ENCODE measurements at regions of chr10 and their contacts with region 1.

Region 1: DNA sequence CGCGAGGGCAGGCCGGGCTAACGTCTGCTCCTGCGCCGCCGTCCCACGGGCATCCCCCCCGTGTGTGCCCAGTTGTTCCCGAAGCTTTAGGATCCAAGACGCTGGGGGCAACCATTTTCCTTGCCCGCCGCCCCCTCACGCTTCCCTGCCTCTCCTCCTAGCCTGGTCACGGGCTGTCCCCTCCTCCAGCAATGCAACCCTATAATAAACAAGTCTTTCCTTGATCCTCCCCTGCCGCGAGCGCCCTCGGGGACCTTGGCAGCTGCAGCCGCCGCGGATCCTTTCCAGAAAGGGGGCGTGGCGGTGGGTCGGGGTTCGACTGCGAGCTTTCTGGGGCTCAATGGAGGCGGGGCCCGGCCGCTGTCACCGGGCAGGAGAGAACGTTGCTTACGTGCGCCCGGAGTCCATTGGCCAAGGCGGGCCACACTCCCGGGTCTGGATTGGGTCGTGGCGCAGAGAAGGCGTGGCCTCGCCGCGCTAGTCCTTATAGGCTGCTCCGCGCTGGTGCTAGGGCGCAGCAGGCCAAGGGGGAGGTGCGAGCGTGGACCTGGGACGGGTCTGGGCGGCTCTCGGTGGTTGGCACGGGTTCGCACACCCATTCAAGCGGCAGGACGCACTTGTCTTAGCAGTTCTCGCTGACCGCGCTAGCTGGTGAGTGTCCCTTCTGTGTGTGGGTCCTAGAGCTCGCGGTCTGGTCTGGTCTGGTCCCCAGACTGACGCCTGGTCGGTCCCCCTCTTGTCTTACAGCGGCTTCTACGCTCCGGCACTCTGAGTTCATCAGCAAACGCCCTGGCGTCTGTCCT is at the start of gene DDIT4:
- DNase-seq: peak; percentile 97
- ATAC-seq: peak; percentile 94
- H3K4me3 ChIP-seq: peak within 1 kb of the TSS; percentile 91 to 99 (median 98)
- H3K4me3 Mint-ChIP-seq: peak within 1 kb of the TSS; percentile 98
- H3K27ac ChIP-seq: peak within 1 kb of the TSS; percentile 80 to 87
- H3K27ac Mint-ChIP-seq: peak within 1 kb of the TSS; percentile 97
- H3K4me1 ChIP-seq: peaks cover 22 to 33% of the 10 kb centered on the region in 2 donors
- H3K4me1 Mint-ChIP-seq: peaks cover 45% of the 10 kb centered on the region
- H3K27me3 ChIP-seq: no peaks in the 10 kb centered on the region
- H3K27me3 Mint-ChIP-seq: no peaks in the 10 kb centered on the region
- CTCF ChIP-seq: no peak
- total RNA-seq, gene DDIT4: 103 and 110 TPM in 2 replicates

Region 2: DNA sequence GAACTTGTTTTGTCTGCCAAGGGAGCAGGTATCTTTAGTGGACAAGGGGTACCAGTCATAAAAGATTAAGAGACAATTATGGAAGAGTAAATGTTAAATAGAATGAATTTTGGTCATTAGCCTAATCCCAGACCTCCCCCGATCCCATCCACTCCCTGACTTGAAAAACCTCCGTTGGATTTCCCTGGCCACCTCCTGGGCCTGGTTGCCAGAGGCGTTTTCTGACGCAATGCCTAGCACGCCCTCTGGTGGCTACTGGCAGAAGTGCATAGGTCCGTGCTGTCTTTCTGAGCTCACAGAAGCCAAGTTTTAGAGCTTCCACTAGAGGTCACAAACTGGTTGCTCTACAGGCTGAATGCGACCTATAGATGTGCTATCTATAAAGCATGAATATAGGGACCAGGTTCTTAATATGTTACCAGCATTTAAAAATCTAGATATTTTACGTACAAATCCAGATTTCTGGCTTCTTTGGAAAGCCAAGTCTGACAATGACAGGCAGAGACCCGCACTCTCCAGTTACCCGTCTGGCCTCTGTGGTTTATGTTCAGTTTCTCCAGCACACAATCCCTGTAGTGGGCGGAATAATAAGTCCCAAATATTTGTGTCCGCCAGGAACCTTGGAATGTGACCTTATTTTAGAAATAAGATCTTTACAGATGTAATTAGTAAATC is 225.0 kb before region 1 on chr10:
- CTCF ChIA-PET with region 1: interaction called, 11 read pairs
- POLR2A ChIA-PET with region 1: no interaction called
- intact Hi-C with region 1: no loop called
- DNase-seq: peak; percentile 91
- ATAC-seq: peak; percentile 98
- H3K4me3 ChIP-seq: no peak overlapping the region
- H3K4me3 Mint-ChIP-seq: no peak overlapping the region
- H3K27ac ChIP-seq: no peak overlapping the region
- H3K27ac Mint-ChIP-seq: no peak overlapping the region
- H3K4me1 ChIP-seq: no peaks in the 10 kb centered on the region
- H3K4me1 Mint-ChIP-seq: no peaks in the 10 kb centered on the region
- H3K27me3 ChIP-seq: no peaks in the 10 kb centered on the region
- H3K27me3 Mint-ChIP-seq: no peaks in the 10 kb centered on the region
- CTCF ChIP-seq: peak; percentile 99

Region 3: GRCh38 chr10:72223743-72224101 is 49.9 kb before region 1 on chr10:
- CTCF ChIA-PET with region 1: interaction called, 11 read pairs
- POLR2A ChIA-PET with region 1: interaction called, 25 read pairs
- intact Hi-C with region 1: no loop called
- DNase-seq: peak; percentile 34
- ATAC-seq: peak; percentile 24
- H3K4me3 ChIP-seq: no peak overlapping the region
- H3K4me3 Mint-ChIP-seq: peak overlapping the region; percentile 44
- H3K27ac ChIP-seq: peak overlapping the region; percentile 42 to 68
- H3K27ac Mint-ChIP-seq: peak overlapping the region; percentile 75
- H3K4me1 ChIP-seq: peaks cover 58 to 70% of the 10 kb centered on the region in 2 donors
- H3K4me1 Mint-ChIP-seq: peaks cover 55% of the 10 kb centered on the region
- H3K27me3 ChIP-seq: no peaks in the 10 kb centered on the region
- H3K27me3 Mint-ChIP-seq: no peaks in the 10 kb centered on the region
- CTCF ChIP-seq: no peak

Region 4: DNA sequence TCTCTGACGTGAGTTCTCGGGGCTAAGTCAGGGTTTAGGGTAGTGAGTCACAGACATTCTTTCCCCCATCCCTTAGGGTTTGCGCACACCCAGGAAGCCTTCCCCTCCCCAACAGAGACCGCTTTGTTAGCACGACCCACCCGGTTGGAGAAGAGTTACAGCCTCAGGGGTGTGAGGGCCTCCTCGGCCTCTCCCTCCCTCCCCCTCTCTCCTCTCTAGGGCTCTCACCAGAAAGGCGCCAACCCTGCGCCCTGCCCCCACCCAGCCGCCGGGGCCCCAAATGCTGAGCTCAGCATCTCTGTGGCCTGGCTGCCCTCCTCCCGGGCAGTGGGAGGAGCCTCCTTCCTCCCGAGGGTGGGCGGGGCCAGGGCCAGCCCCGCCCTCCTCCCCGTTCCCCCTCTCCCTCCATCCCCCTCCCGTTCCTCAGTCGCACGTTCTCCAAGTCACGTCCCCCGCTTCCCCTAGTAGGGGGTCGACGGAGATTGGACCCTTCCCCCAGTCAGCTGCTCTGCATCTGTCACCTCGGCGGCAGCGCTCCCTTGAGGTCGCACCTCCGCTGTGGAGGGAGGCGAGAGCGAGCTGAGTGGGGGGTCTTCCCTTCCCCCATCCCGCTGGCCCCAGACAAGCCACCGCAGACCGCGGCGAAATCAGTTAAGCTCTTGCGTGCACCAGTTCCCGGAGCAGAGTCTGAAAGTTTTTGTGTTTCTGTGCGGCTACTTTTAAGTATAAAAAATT is 12.9 kb before region 1 on chr10:
- CTCF ChIA-PET with region 1: interaction called, 33 read pairs
- POLR2A ChIA-PET with region 1: interaction called, 41 read pairs
- intact Hi-C with region 1: loop called (anchors 1 kb)
- DNase-seq: peak; percentile 81
- ATAC-seq: peak; percentile 81
- H3K4me3 ChIP-seq: peak overlapping the region; percentile 51 to 80 (median 73)
- H3K4me3 Mint-ChIP-seq: peak overlapping the region; percentile 94
- H3K27ac ChIP-seq: peak overlapping the region; percentile 47 to 67
- H3K27ac Mint-ChIP-seq: peak overlapping the region; percentile 89
- H3K4me1 ChIP-seq: peaks cover 48 to 68% of the 10 kb centered on the region in 2 donors
- H3K4me1 Mint-ChIP-seq: peaks cover 51% of the 10 kb centered on the region
- H3K27me3 ChIP-seq: no peaks in the 10 kb centered on the region
- H3K27me3 Mint-ChIP-seq: no peaks in the 10 kb centered on the region
- CTCF ChIP-seq: no peak

Region 5: GRCh38 chr10:72319416-72320254 is 46.0 kb after region 1 on chr10:
- CTCF ChIA-PET with region 1: interaction called, 36 read pairs
- POLR2A ChIA-PET with region 1: interaction called, 73 read pairs
- intact Hi-C with region 1: loop called (anchors 1 kb)
- DNase-seq: peak; percentile 92
- ATAC-seq: peak; percentile 65
- H3K4me3 ChIP-seq: peak overlapping the region in 4 of 5 experiments; percentile 49 to 68 (median 58)
- H3K4me3 Mint-ChIP-seq: peak overlapping the region; percentile 88
- H3K27ac ChIP-seq: peak overlapping the region; percentile 94 to 95
- H3K27ac Mint-ChIP-seq: peak overlapping the region; percentile 99
- H3K4me1 ChIP-seq: peaks cover 78 to 91% of the 10 kb centered on the region in 2 donors
- H3K4me1 Mint-ChIP-seq: peaks cover 78% of the 10 kb centered on the region
- H3K27me3 ChIP-seq: no peaks in the 10 kb centered on the region
- H3K27me3 Mint-ChIP-seq: no peaks in the 10 kb centered on the region
- CTCF ChIP-seq: no peak

Region 6: GRCh38 chr10:72616716-72617115 is 343.1 kb after region 1 on chr10:
- CTCF ChIA-PET with region 1: no interaction called
- POLR2A ChIA-PET with region 1: no interaction called
- intact Hi-C with region 1: no loop called
- DNase-seq: no peak
- ATAC-seq: no peak
- H3K4me3 ChIP-seq: no peak overlapping the region
- H3K4me3 Mint-ChIP-seq: no peak overlapping the region
- H3K27ac ChIP-seq: no peak overlapping the region
- H3K27ac Mint-ChIP-seq: no peak overlapping the region
- H3K4me1 ChIP-seq: peaks cover under 1 to 1% of the 10 kb centered on the region in 2 donors
- H3K4me1 Mint-ChIP-seq: peaks cover 6% of the 10 kb centered on the region
- H3K27me3 ChIP-seq: no peaks in the 10 kb centered on the region
- H3K27me3 Mint-ChIP-seq: no peaks in the 10 kb centered on the region
- CTCF ChIP-seq: no peak

Region 7: GRCh38 chr10:72692057-72692910 is 418.7 kb after region 1 on chr10 and contains the start of gene MCU:
- CTCF ChIA-PET with region 1: no interaction called
- POLR2A ChIA-PET with region 1: no interaction called
- intact Hi-C with region 1: loop called (anchors 5 kb)
- DNase-seq: peak; percentile 94
- ATAC-seq: peak; percentile 95
- H3K4me3 ChIP-seq: peak within 1 kb of the TSS; percentile 64 to 91 (median 79)
- H3K4me3 Mint-ChIP-seq: peak within 1 kb of the TSS; percentile 95
- H3K27ac ChIP-seq: peak within 1 kb of the TSS; percentile 58 to 72
- H3K27ac Mint-ChIP-seq: peak within 1 kb of the TSS; percentile 91
- H3K4me1 ChIP-seq: peaks cover 28 to 33% of the 10 kb centered on the region in 2 donors
- H3K4me1 Mint-ChIP-seq: peaks cover 43% of the 10 kb centered on the region
- H3K27me3 ChIP-seq: no peaks in the 10 kb centered on the region
- H3K27me3 Mint-ChIP-seq: no peaks in the 10 kb centered on the region
- CTCF ChIP-seq: no peak
- total RNA-seq, gene MCU: 17.6 and 21.1 TPM in 2 replicates

Measured in B cell (primary cell).